CD4-positive, alpha-beta T cell (primary cell): ENCODE measurements at regions of chr4 and their contacts with region 1.

Region 1: GRCh38 chr4:173288296-173288695 is 45.9 kb downstream of the HMGB2 start:
- DNase-seq: peak; percentile 36 to 80 (median 63)
- ATAC-seq: peak; percentile 56
- H3K4me3 ChIP-seq: no peak overlapping the region
- H3K4me3 Mint-ChIP-seq: peak overlapping the region; percentile 45
- H3K27ac ChIP-seq: no peak overlapping the region
- H3K27ac Mint-ChIP-seq: peak overlapping the region; percentile 6
- H3K4me1 ChIP-seq: peaks cover 3% of the 10 kb centered on the region
- H3K4me1 Mint-ChIP-seq: peaks cover 17% of the 10 kb centered on the region
- H3K27me3 ChIP-seq: no peaks in the 10 kb centered on the region
- H3K27me3 Mint-ChIP-seq: no peaks in the 10 kb centered on the region
- CTCF ChIP-seq: peak; percentile 68

Region 2: DNA sequence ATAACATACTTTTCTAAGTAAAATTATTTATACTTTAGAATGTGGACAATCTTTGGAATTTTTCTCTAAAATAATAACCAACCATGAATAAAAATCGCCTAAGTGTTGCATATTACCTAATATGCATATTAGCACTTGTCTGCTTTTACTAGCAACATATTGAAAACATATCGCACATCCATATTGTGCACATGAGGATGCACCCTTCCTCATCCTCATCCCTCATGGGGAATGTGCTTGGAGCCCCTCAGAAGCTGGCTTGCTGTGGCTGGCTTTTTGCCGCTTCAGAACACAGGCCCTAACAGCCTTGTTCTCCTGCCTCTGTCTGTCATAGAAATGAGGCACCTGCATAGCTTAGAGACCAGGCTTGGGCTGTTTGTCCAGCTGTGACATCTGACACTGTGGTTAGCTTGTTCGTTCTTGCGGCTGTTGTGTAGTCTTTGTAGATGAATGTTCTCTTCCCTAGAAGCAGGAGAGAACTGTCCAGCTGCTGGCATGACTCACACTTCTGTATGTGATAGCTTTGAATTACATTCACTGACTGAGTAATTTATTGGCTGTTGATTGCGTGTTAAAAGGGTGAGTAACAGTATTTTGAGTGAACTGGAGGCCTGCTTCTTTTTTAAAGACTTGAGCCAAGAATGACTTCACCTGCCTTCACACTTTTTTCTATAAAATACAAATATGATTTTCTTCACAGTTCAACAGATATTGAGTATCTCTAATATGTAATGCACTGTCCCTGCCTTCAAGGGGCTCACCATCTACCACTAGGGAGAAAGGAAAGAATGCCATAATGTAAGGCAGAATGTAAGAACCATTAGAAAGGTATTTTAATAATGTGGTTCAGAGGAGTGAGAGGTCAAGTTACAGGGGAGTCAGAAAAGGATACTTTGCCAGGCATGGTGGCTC is 36.0 kb before region 1 on chr4:
- CTCF ChIA-PET with region 1: no interaction called
- POLR2A ChIA-PET with region 1: no interaction called
- intact Hi-C with region 1: no loop called
- DNase-seq: peak in 2 of 14 experiments; percentile 17 to 39
- ATAC-seq: no peak
- H3K4me3 ChIP-seq: no peak overlapping the region
- H3K4me3 Mint-ChIP-seq: no peak overlapping the region
- H3K27ac ChIP-seq: no peak overlapping the region
- H3K27ac Mint-ChIP-seq: no peak overlapping the region
- H3K4me1 ChIP-seq: no peaks in the 10 kb centered on the region
- H3K4me1 Mint-ChIP-seq: peaks cover 14% of the 10 kb centered on the region
- H3K27me3 ChIP-seq: no peaks in the 10 kb centered on the region
- H3K27me3 Mint-ChIP-seq: no peaks in the 10 kb centered on the region
- CTCF ChIP-seq: no peak

Region 3: DNA sequence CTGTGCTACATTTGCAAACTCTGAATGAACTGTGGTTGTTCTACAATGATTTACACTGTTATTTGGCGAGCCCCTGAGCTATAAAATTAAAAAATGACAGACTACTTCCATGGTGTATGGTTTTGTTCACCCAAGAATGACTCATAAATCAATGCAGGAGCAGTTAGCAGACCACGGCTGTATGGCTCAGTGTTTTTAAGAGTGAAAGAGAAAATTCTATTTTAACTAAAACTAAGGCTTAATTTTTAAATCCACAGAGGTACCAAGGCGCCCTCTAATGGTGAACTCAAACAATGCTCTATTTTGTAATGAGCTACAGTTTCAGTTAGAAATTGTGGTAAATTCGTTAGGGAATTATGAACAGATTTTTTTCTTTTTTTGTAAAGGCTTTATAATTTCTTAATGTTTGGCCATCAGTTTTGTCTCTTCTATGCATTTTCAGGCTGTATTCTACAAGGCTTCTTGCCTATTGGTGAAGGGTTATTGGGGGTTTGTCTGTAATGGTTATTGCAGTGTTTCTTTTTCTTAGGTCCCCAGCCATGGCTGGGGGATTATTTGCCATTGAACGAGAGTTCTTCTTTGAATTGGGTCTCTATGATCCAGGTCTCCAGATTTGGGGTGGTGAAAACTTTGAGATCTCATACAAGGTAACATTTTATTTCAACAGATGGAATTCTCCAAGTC is 13.4 kb after region 1 on chr4:
- CTCF ChIA-PET with region 1: interaction called, 11 read pairs
- POLR2A ChIA-PET with region 1: no interaction called
- intact Hi-C with region 1: no loop called
- DNase-seq: peak in 4 of 14 experiments; percentile 19 to 57 (median 45)
- ATAC-seq: peak; percentile 39
- H3K4me3 ChIP-seq: no peak overlapping the region
- H3K4me3 Mint-ChIP-seq: no peak overlapping the region
- H3K27ac ChIP-seq: no peak overlapping the region
- H3K27ac Mint-ChIP-seq: peak overlapping the region; percentile 19
- H3K4me1 ChIP-seq: no peaks in the 10 kb centered on the region
- H3K4me1 Mint-ChIP-seq: peaks cover 7% of the 10 kb centered on the region
- H3K27me3 ChIP-seq: no peaks in the 10 kb centered on the region
- H3K27me3 Mint-ChIP-seq: no peaks in the 10 kb centered on the region
- CTCF ChIP-seq: peak; percentile 80